Activated CD4-positive, alpha-beta T cell treated with anti-CD3 and anti-CD28 coated beads, Interleukin-2, amount 10 ng/mL, durations not matched to agents 24 days and 14 days (primary cell): ENCODE measurements at regions of chrX and their contacts with region 1.

Region 1: DNA sequence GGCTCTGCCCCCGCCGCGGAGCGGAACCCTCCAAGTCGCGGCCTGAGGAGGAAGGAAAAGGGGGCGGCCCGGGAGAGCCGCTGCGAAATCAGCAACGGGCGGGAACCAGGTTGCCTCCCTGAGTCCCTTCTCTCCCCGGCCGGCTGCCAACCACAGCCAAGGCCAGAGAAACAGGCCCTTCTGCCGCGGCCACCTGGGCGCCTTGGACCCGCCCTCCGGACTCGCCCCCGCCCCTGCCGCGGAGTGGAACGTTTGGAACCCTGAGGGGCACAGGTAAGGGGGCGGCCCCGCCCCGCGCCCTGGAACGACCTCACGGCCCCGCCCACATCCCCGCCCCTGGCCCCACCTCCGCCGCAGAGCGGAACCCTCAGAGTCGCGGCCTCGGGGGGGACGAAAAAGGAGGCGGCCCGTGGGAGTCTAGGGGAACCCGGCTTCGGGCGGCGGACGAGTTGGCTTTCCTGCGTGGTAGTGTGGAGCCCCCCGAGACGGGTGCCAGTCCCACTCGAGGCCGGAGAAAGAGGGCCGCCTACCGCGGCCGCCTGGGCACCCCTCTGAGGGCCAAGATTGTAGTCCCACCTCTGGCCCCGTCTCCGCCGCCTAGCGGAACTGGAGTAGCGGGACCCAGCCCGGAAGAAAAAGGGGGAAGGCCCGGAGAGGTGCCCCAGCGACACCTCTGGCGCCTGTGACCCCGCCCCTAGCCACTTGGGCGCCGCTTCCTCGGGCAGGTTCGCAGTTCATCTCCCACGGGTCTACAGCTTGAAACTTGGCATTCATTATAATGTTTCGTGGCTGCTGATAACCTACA is 669 bp upstream of the PHKA2 start:
- DNase-seq: peak; percentile 94
- H3K4me3 Mint-ChIP-seq: peak overlapping the region; percentile 82
- H3K27ac Mint-ChIP-seq: peak overlapping the region; percentile 90
- H3K4me1 Mint-ChIP-seq: peaks cover 11% of the 10 kb centered on the region
- H3K27me3 Mint-ChIP-seq: no peaks in the 10 kb centered on the region

Region 2: GRCh38 chrX:18047491-18047890 is 937.1 kb before region 1 on chrX:
- intact Hi-C with region 1: no loop called
- DNase-seq: no peak
- H3K4me3 Mint-ChIP-seq: no peak overlapping the region
- H3K27ac Mint-ChIP-seq: no peak overlapping the region
- H3K4me1 Mint-ChIP-seq: no peaks in the 10 kb centered on the region
- H3K27me3 Mint-ChIP-seq: no peaks in the 10 kb centered on the region

Region 3: GRCh38 chrX:18368402-18368801 is 616.2 kb before region 1 on chrX:
- intact Hi-C with region 1: no loop called
- DNase-seq: no peak
- H3K4me3 Mint-ChIP-seq: no peak overlapping the region
- H3K27ac Mint-ChIP-seq: no peak overlapping the region
- H3K4me1 Mint-ChIP-seq: no peaks in the 10 kb centered on the region
- H3K27me3 Mint-ChIP-seq: peaks cover 4% of the 10 kb centered on the region

Region 4: DNA sequence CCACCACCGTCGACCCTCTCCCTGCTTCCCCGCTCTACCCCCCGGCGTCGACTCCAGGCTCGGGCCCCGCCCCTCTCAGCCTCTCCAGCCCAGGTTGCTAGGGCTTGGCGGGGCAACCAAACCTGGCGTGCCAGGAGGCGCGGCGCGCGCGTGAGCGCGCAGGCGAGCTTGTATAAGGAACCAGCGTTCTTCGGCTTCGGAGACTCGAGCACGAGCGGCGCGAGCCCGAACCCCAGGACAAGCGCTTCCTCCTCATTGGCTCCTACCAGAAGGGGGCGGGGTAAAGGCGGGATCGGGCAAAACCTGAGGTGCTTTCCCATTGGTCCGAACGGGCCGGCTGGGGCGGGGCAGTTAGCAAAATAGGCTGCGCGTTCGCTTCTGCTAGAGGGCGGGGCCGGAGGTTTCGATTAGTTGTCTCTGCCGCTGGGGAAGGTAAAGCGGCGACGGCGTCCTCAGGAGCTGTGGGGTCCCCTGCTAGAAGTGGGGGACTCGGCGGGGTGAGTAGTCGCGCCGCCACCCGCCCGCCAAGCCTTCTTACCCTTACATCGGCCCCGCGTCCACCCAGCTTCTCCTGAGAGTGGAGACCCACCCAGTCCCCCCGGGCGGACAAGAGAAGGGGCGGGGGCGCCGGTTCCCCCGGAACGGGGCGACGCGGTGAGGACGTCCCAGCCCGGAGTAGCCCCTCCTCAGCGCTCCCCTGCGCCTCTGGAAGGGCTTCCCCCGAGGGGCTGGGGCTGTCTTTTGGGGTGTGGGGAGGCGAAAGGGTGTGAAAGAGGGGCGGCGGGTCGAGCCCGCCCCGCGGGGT is 559.2 kb before region 1 on chrX and contains the start of gene CDKL5:
- intact Hi-C with region 1: loop called (anchors 1 kb)
- DNase-seq: peak; percentile 98
- H3K4me3 Mint-ChIP-seq: peak within 1 kb of the TSS; percentile 89
- H3K27ac Mint-ChIP-seq: no peak within 1 kb of the TSS
- H3K4me1 Mint-ChIP-seq: peaks cover 9% of the 10 kb centered on the region
- H3K27me3 Mint-ChIP-seq: peaks cover 21% of the 10 kb centered on the region
- total RNA-seq, gene CDKL5: 0.23 and 0.43 TPM in 2 replicates

Region 5: GRCh38 chrX:18931972-18932371 is 52.6 kb before region 1 on chrX:
- intact Hi-C with region 1: no loop called
- DNase-seq: peak; percentile 55
- H3K4me3 Mint-ChIP-seq: no peak overlapping the region
- H3K27ac Mint-ChIP-seq: no peak overlapping the region
- H3K4me1 Mint-ChIP-seq: no peaks in the 10 kb centered on the region
- H3K27me3 Mint-ChIP-seq: no peaks in the 10 kb centered on the region

Region 6: DNA sequence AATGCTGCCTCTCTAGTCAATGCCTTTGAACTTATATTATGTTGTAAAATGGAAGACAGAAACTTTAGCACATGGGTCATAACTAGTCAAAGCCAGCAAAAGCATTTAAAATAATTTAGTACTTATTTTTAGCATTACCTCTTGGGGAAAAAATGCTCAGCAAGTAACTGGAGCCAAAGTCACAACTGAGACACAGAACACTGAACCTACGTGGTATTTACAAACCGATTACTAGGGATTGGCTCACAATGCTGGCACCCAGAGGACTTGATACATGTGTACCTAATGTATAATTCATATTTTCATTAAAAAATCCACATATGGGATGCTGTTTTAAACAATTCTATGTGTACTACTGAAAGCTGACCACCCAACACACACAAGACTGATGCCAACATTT is 39.1 kb before region 1 on chrX:
- intact Hi-C with region 1: no loop called
- DNase-seq: no peak
- H3K4me3 Mint-ChIP-seq: no peak overlapping the region
- H3K27ac Mint-ChIP-seq: no peak overlapping the region
- H3K4me1 Mint-ChIP-seq: no peaks in the 10 kb centered on the region
- H3K27me3 Mint-ChIP-seq: no peaks in the 10 kb centered on the region

Region 7: GRCh38 chrX:18955676-18956075 is 28.9 kb before region 1 on chrX:
- intact Hi-C with region 1: loop called (anchors 2 kb)
- DNase-seq: no peak
- H3K4me3 Mint-ChIP-seq: no peak overlapping the region
- H3K27ac Mint-ChIP-seq: no peak overlapping the region
- H3K4me1 Mint-ChIP-seq: peaks cover 12% of the 10 kb centered on the region
- H3K27me3 Mint-ChIP-seq: no peaks in the 10 kb centered on the region